Caco-2 (cell line): ENCODE measurements at regions of chr17 and their contacts with region 1.

Region 1: DNA sequence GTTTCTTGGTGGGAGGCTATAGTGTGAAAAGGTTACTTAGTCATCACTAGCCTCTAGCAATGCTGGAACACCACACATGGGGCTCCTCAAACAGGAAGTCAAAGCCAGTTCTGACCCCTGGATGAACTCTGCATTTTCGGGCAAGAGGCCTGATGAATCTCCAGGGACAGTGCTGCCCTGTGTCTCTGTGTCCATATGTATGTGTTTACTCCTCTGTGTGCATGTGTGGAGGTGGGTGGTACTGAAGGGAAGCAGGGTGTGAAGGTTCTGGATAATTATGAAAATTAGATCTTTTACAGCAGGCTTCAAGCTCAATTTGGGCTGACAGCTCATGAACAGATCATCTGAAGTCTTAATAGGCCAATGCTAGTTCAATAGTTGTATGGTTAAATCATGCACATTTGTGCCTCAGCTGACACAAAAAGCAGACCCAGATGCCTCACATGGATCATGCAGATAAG is 133.6 kb downstream of the SNX11 start:
- DNase-seq: peak in 1 of 2 experiments; percentile 68
- H3K4me3 ChIP-seq: no peak overlapping the region
- H3K4me3 Mint-ChIP-seq: no peak overlapping the region
- H3K27ac Mint-ChIP-seq: no peak overlapping the region
- H3K4me1 ChIP-seq: peaks cover 63% of the 10 kb centered on the region
- H3K4me1 Mint-ChIP-seq: peaks cover 57% of the 10 kb centered on the region
- H3K27me3 ChIP-seq: no peaks in the 10 kb centered on the region
- H3K27me3 Mint-ChIP-seq: no peaks in the 10 kb centered on the region
- CTCF ChIP-seq: no peak

Region 2: DNA sequence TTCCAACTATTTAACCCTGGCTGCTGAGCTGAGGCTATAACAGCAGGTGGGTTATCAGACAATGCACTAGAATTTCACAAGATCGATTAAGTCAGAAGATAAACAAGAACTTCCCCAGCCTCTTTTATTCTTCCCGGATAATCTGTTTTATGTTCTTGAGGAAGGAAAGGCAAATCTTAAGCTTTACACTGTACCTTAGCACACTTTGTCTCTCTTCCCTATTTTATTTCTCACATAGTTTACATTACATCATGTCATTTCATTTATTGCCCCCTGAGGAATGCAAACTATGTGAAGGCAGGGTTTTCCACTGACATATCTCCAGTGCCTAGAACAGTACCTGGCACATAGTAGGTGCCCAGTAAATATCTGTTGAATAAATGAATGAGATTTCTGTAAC is 49.2 kb after region 1 on chr17:
- CTCF ChIA-PET with region 1: no interaction called
- POLR2A ChIA-PET with region 1: no interaction called
- intact Hi-C with region 1: loop called (anchors 2 kb)
- DNase-seq: peak in 1 of 2 experiments; percentile 32
- H3K4me3 ChIP-seq: no peak overlapping the region
- H3K4me3 Mint-ChIP-seq: no peak overlapping the region
- H3K27ac Mint-ChIP-seq: no peak overlapping the region
- H3K4me1 ChIP-seq: peaks cover 9% of the 10 kb centered on the region
- H3K4me1 Mint-ChIP-seq: peaks cover 10% of the 10 kb centered on the region
- H3K27me3 ChIP-seq: no peaks in the 10 kb centered on the region
- H3K27me3 Mint-ChIP-seq: peaks cover 9% of the 10 kb centered on the region
- CTCF ChIP-seq: no peak